ENCODE measurements at regions of chr17 and their contacts with region 1.

Region 1: DNA sequence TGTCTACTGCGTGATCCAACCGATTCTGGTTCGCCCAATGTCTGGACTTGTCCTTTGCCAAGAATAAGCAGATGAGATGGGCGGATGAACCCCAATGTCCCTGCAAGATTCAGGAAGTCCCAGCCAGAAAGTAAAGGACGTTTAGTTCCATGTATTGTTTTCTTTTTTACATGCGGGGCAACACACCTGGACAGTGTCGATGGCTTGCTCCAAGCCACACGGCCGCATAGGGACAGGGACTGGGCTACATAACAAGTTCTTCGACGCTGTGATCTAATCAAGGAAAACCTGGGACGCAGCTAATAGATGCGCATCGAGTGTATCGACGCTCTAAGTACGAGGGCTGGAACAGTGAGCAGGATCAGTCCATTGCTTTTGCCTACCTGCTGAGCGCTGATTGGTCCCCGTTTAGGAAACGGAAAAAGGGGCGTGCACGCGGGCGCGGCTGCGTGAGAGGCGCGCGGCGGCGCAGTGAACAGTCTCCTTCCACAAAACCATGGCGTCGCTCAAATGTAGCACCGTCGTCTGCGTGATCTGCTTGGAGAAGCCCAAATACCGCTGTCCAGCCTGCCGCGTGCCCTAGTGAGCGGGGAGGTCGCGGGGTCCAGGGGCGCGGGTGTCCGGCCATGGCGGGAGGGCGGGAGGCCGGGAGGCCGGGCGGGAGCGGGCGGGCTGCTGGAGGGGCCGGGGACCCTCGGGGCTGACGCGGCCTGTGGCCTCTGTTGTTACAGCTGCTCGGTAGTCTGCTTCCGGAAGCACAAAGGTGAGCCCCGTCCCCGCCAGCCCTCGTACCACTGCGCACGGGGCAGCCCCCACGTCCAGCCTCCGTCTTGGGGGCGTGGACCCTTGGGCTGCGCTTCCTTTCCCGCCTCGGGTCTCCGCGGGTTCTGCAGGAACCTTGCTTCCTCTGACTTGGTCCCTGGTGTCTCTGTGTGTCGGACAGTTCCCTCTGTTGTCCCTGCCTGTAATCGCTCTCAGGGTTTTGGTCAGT is at the start of gene ZNHIT3:
- DNase-seq: peak; percentile 76 to 95 (median 90)
- ATAC-seq: peak; percentile 95 to 97 (median 96)
- H3K4me3 ChIP-seq: peak within 1 kb of the TSS; percentile 85 to 96
- H3K4me3 Mint-ChIP-seq: peak within 1 kb of the TSS; percentile 94 to 99 (median 98)
- H3K27ac ChIP-seq: peak within 1 kb of the TSS; percentile 62
- H3K27ac Mint-ChIP-seq: peak within 1 kb of the TSS; percentile 96 to 98
- H3K4me1 ChIP-seq: peaks cover 16 to 47% of the 10 kb centered on the region in 2 experiments
- H3K4me1 Mint-ChIP-seq: peaks cover 52 to 69% (median 56%) of the 10 kb centered on the region in 3 donors
- H3K27me3 ChIP-seq: peaks cover 6 to 17% of the 10 kb centered on the region in 2 experiments
- H3K27me3 Mint-ChIP-seq: peaks cover 9 to 13% of the 10 kb centered on the region in 2 donors
- total RNA-seq, gene ZNHIT3: 44.2 to 54.6 (median 51.3) TPM

Region 2: GRCh38 chr17:36498155-36498554 is 11.7 kb after region 1 on chr17:
- CTCF ChIA-PET with region 1: interaction called in 1 of 2 experiments, 3 read pairs
- POLR2A ChIA-PET with region 1: interaction called in 1 of 2 experiments, 10 read pairs
- DNase-seq: peak in 1 of 35 experiments; percentile 8
- ATAC-seq: no peak
- H3K4me3 ChIP-seq: no peak overlapping the region
- H3K4me3 Mint-ChIP-seq: no peak overlapping the region
- H3K27ac ChIP-seq: no peak overlapping the region
- H3K27ac Mint-ChIP-seq: no peak overlapping the region
- H3K4me1 ChIP-seq: no peaks in the 10 kb centered on the region
- H3K4me1 Mint-ChIP-seq: peaks cover 0 to 3% (median 3%) of the 10 kb centered on the region in 3 donors
- H3K27me3 ChIP-seq: no peaks in the 10 kb centered on the region
- H3K27me3 Mint-ChIP-seq: no peaks in the 10 kb centered on the region

Region 3: DNA sequence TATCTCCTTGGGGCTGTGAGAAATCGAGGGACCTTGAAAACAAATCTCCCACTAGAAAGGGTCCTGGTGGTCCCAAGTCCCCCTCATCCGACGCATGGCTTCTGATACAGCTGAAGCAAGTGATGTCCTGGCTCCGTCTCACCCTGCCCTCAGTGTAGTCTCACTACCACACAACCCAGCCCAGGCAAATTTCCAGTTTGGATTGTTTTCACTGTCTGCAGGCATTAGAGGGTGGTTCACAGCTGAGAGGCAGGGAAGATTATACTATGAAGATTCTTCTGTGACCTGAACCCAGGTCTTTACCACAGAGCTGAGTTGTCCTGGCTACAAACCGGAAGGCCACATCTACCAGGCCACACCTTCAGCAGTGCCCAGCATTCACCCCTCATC is 17.7 kb after region 1 on chr17:
- CTCF ChIA-PET with region 1: no interaction called
- POLR2A ChIA-PET with region 1: interaction called in 1 of 2 experiments, 10 read pairs
- DNase-seq: no peak
- ATAC-seq: no peak
- H3K4me3 ChIP-seq: no peak overlapping the region
- H3K4me3 Mint-ChIP-seq: no peak overlapping the region
- H3K27ac ChIP-seq: no peak overlapping the region
- H3K27ac Mint-ChIP-seq: no peak overlapping the region
- H3K4me1 ChIP-seq: no peaks in the 10 kb centered on the region
- H3K4me1 Mint-ChIP-seq: no peaks in the 10 kb centered on the region
- H3K27me3 ChIP-seq: no peaks in the 10 kb centered on the region
- H3K27me3 Mint-ChIP-seq: no peaks in the 10 kb centered on the region